ENCODE measurements at regions of chr6 and their contacts with region 1.

Region 1: DNA sequence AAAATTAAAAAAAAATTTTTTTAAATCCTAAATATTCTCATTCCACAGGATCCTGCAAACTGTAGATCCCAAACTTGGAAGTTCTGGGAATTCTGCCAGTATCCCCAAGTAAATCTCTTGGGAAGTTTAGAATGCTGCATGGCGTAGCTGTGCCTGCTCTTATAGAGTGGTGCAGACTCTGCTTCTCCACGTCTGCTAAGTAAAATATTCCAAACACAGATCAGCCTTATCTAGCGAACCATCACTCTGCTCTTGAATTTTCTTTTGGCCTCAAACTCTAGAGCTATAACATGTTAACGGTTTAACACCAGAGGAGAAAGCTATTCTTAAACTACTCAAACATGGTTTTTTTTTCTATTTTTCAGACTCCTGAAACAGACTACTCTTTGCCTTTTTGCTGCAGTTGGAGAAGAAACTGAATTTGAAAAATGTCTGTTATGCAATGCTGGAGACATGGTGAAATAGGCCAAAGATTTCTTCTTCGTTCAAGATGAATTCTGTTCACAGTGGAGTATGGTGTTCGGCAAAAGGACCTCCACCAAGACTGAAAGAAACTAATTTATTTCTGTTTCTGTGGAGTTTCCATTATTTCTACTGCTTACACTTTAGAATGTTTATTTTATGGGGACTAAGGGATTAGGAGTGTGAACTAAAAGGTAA is 138.5 kb upstream of the AKAP12 start:
- DNase-seq: no peak
- ATAC-seq: peak; percentile 37; the same call in 1 of the 2 replicates
- H3K4me3 ChIP-seq: no peak overlapping the region
- H3K27ac ChIP-seq: no peak overlapping the region
- H3K4me1 ChIP-seq: peaks cover 3% of the 10 kb centered on the region
- H3K27me3 ChIP-seq: no peaks in the 10 kb centered on the region
- CTCF ChIP-seq: no peak
- POLR2A ChIP-seq: no peak
- RAD21 ChIP-seq: no peak

Region 2: DNA sequence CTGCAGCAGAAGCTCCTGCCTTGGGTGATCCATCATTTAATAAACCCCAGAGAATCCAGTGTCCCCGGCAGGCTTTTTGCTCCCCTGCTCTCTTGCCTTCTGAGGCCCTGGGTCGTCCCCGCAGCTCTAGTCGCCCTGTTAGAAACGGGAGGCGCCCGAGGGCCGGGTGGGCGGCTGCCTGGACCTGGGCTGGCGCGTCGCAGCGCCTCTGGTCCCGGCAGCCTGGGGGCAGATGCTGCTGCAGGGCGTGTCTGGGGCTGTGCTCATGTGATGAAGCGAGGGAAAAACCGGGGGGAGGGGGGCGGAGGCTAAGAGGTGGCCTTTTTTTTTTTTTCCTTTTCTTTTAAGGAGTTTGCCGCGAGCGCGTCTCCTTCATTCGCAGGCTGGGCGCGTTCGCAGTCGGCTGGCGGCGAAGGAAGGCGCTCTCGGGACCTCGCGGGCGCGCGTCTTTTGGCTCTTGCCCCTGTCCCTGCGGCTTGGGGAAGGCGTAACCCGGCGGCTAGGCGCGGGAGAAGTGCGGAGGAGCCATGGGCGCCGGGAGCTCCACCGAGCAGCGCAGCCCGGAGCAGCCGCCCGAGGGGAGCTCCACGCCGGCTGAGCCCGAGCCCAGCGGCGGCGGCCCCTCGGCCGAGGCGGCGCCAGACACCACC is 138.9 kb after region 1 on chr6:
- CTCF ChIA-PET with region 1: no interaction called
- POLR2A ChIA-PET with region 1: interaction called, 10 read pairs
- dilution Hi-C with region 1: no loop called
- in situ Hi-C with region 1: no loop called
- intact Hi-C with region 1: no loop called
- DNase-seq: peak; percentile 64
- ATAC-seq: peak; percentile 73
- H3K4me3 ChIP-seq: peak overlapping the region; percentile 69
- H3K27ac ChIP-seq: peak overlapping the region; percentile 68
- H3K4me1 ChIP-seq: no peaks in the 10 kb centered on the region
- H3K27me3 ChIP-seq: peaks cover 3% of the 10 kb centered on the region; the same call in 1 of the 2 replicates
- CTCF ChIP-seq: no peak
- POLR2A ChIP-seq: peak; percentile 74; the same call in 1 of the 2 replicates
- RAD21 ChIP-seq: no peak